Endothelial cell of umbilical vein (primary cell): ENCODE measurements at regions of chr21 and their contacts with region 1.

Region 1: DNA sequence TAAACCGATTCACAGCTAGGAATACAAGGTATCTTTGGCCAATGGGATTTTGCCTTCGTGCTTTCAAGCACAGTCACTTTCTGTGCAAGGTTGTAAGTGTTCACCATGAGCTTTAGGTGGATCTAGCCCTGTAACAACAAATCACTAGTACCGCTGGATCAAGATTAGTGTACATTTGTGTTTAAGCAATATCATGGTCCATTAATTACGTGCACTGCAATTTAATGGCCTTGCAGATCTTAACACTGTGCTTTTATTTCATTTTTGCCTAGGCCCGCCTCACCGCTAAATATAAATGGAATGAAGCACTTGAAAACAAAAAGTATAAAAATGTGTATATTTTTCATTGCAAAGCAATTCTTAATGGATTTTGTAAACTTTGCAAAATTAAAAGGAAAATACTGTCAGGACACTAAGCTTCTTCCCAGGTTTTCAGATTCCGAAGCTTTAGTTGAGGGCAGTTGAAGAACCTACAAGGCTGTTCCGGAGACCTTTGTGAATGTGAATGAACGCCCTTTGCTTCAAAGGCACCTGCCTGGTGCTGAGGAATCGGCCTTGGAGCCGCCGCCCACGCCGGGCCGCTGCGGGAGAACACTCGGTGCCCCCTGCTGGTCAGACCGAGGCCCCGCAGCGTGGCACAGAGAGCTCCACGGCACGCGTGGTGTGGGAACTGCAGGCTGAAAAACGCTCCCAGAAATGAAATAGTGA is 460.9 kb downstream of the DSCAM start:
- DNase-seq: no peak
- H3K4me3 ChIP-seq: no peak overlapping the region
- H3K27ac ChIP-seq: no peak overlapping the region
- H3K4me1 ChIP-seq: no peaks in the 10 kb centered on the region
- H3K27me3 ChIP-seq: no peaks in the 10 kb centered on the region
- CTCF ChIP-seq: peak; percentile 13 to 60
- POLR2A ChIP-seq: no peak

Region 2: DNA sequence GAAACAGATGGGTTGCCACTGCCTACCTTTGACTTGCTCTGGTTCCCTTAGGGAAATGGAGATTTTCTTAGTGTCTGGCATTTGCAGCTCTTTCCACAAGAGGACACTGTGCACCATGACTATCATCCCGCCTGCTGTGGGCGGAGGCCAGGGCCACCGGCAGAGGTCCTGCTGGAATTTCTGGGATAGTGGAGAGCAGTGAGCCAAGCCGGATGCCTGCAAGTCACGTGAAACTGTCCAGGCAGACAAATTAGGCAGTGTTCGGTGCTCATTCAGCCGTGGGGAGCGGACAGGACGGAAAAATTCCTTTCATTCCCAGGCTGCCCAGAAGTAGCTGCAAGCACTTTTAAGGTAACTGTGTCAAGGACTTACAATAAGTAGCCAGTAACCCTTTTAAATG is 597.7 kb before region 1 on chr21:
- CTCF ChIA-PET with region 1: no interaction called
- POLR2A ChIA-PET with region 1: no interaction called
- dilution Hi-C with region 1: no loop called
- intact Hi-C with region 1: loop called (anchors 5 kb)
- DNase-seq: peak; percentile 70
- H3K4me3 ChIP-seq: no peak overlapping the region
- H3K27ac ChIP-seq: no peak overlapping the region
- H3K4me1 ChIP-seq: no peaks in the 10 kb centered on the region
- H3K27me3 ChIP-seq: no peaks in the 10 kb centered on the region
- CTCF ChIP-seq: peak; percentile 65 to 72
- POLR2A ChIP-seq: no peak

Region 3: GRCh38 chr21:40143822-40144525 is 242.1 kb before region 1 on chr21:
- CTCF ChIA-PET with region 1: no interaction called
- POLR2A ChIA-PET with region 1: no interaction called
- dilution Hi-C with region 1: no loop called
- intact Hi-C with region 1: loop called (anchors 5 kb)
- DNase-seq: peak; percentile 16
- H3K4me3 ChIP-seq: no peak overlapping the region
- H3K27ac ChIP-seq: no peak overlapping the region
- H3K4me1 ChIP-seq: no peaks in the 10 kb centered on the region
- H3K27me3 ChIP-seq: no peaks in the 10 kb centered on the region
- CTCF ChIP-seq: peak; percentile 41 to 45
- POLR2A ChIP-seq: no peak